Ascending aorta (tissue), 2 donors: ENCODE measurements at regions of chr7 and their contacts with region 1.

Region 1: GRCh38 chr7:26365077-26365900 is 73.6 kb downstream of the SNX10 start:
- DNase-seq: peak in 1 of 2 donors; percentile 71
- H3K4me3 ChIP-seq: no peak overlapping the region
- H3K27ac ChIP-seq: no peak overlapping the region
- H3K4me1 ChIP-seq: no peaks in the 10 kb centered on the region
- H3K27me3 ChIP-seq: no peaks in the 10 kb centered on the region
- CTCF ChIP-seq: peak; percentile 64 to 73 (median 72)

Region 2: GRCh38 chr7:25870574-25870973 is 494.7 kb before region 1 on chr7:
- intact Hi-C with region 1: loop called (anchors 5 kb)
- DNase-seq: no peak
- H3K4me3 ChIP-seq: no peak overlapping the region
- H3K27ac ChIP-seq: no peak overlapping the region
- H3K4me1 ChIP-seq: no peaks in the 10 kb centered on the region
- H3K27me3 ChIP-seq: peaks cover 13% of the 10 kb centered on the region
- CTCF ChIP-seq: no peak

Region 3: GRCh38 chr7:26090927-26091519 is 274.3 kb before region 1 on chr7:
- intact Hi-C with region 1: loop called (anchors 2 kb)
- DNase-seq: no peak
- H3K4me3 ChIP-seq: peak overlapping the region in 1 of 2 donors; percentile 2
- H3K27ac ChIP-seq: no peak overlapping the region
- H3K4me1 ChIP-seq: no peaks in the 10 kb centered on the region
- H3K27me3 ChIP-seq: no peaks in the 10 kb centered on the region
- CTCF ChIP-seq: peak; percentile 43 to 58 (median 43)

Region 4: DNA sequence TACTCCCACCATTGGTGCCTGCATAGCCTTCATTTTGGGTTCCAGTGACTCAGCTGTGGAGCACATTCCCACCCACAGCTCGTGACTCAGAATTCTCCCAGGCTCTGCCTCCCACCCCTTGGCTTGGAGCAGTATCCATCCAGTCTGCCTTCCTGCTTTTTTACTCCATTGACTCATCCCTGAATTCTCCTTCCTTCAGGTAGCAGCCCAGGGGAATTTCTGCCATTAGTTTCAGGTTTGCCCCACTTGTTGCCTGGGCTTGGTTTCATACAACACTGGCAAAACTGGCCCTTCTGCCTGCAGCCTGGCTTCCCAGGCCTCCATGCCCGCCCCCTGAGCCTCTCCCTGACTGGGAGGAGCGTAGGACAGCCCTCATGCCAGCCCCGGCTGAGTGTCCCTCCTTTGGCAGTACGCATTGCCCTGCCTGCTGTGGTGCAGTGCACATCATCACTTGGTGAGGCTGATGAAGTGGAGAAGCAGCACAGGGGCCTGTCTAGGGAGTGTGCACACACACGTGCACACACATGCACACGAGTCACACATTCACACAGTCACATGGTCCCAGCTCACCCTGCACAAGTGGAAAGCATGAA is 18.6 kb before region 1 on chr7:
- intact Hi-C with region 1: no loop called
- DNase-seq: no peak
- H3K4me3 ChIP-seq: no peak overlapping the region
- H3K27ac ChIP-seq: no peak overlapping the region
- H3K4me1 ChIP-seq: no peaks in the 10 kb centered on the region
- H3K27me3 ChIP-seq: no peaks in the 10 kb centered on the region
- CTCF ChIP-seq: no peak

Region 5: DNA sequence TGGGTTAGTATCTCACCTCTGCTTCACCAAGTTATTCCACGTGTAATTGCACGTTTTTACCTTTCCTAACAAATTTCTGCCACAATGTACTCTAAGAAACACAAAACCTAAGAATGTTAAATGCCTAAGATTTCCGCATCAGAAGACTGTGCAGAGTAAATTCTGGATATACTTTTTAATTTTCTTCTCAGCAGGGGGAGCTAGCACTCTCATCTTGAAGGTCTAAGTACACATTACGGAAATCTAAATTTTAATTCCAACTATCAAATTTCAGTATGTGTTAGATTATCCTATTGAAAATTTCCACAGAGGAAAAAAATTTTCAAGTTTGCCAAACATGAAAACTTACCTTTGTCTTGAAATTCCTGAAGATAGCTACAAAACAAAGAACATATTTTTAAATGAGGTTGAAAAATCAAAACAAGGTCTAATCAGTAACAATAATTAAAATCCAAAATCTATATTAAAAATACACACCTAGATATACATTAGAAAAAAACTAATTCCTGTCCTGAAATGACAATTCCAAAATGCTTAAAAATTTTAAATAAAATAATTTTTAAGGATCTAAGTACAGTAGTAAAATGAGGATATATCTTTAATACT is 488.6 kb after region 1 on chr7:
- intact Hi-C with region 1: loop called (anchors 5 kb)
- DNase-seq: no peak
- H3K4me3 ChIP-seq: no peak overlapping the region
- H3K27ac ChIP-seq: no peak overlapping the region
- H3K4me1 ChIP-seq: peaks cover 0 to 2% of the 10 kb centered on the region in 2 donors
- H3K27me3 ChIP-seq: no peaks in the 10 kb centered on the region
- CTCF ChIP-seq: peak; percentile 37 to 67 (median 50)

Region 6: DNA sequence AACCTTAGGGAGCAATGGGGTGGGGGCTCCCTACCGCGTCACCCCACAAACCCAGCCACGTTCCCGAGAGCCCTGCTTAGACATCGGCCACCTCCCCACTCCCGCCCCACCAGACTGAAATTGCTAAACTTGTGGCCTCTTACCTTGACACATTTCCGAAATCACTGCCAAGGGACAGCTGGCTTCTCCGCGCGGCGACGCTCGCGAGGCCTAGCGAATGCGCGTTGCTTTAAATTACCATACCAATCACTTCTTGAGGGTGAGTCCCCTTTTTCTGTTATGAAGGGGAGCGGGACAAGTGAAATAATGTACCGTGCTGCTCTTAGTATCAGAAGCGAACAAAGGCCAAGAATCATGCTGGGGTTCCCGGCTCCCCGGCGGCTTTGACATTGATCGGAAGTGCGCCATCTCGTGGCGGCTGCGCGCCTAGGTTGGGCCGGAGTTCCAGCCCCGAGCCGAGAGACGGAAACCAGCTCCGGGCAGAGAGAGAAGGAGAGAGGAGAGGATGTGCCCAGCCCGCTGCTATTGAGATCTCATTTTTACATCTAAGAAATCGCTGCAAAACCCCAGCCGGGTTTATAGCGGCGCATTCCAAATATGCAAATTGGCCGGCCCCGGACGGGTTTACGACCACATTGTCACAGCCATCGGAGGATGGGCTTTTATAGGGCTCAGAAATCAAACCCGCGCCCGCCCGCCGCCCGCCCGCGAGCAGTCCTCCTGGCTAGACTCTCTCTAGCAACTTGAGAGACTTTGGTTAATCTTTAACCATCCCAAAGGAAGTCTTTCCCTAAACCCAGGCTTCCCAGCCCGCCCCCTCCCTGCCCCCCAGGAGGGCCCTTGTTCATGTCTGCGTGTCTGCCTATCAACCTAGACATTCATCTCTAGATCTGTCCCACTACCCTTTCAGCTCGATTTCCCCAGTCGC is 814.5 kb after region 1 on chr7:
- intact Hi-C with region 1: loop called (anchors 5 kb)
- DNase-seq: peak in 1 of 2 donors; percentile 73
- H3K4me3 ChIP-seq: peak overlapping the region in 1 of 2 donors; percentile 22
- H3K27ac ChIP-seq: no peak overlapping the region
- H3K4me1 ChIP-seq: peaks cover 2 to 15% of the 10 kb centered on the region in 2 donors
- H3K27me3 ChIP-seq: peaks cover 26% of the 10 kb centered on the region
- CTCF ChIP-seq: peak; percentile 39 to 78 (median 77)